Activated CD8-positive, alpha-beta T cell treated with anti-CD3 and anti-CD28 coated beads, Interleukin-2, amount 10 ng/mL, durations not matched to agents 7 days and 5 days (primary cell): ENCODE measurements at regions of chr14 and their contacts with region 1.

Region 1: DNA sequence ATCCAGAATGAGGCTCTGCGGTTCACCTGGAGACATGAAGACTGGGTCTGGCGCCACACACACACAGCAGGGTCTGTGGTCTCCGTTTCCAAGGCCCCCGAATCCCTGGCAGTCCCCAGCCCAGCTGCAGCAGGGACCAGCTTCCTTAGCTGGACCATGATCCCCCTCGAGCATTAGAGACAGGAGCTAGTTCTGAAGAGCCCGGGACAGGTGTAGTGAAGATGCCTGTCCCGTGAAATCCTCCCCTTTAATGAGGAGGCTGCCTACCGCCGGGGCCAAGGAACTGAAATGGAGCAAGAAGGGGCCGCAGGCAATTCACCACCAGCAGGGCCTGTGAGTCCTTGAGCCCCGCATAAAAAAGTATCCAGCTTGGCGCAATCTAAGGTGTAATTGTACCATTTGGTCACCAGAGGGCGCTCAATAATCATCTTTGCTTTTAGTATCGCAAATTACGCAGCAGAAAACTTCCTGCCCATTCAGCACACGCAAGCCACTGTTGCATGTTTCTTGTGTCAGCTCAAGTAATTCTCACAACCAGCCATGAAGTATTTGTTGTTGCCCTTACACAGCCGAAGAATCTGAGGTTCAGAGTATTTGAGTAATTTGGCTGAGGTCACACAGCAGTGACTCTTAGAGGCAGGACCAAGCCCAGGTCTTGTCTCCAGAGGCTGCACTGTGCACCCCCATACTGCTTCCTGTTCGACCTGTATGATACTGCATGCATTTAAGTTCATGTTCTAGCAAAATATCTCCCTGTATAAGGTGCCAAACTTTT is 54.3 kb upstream of the PPP2R5C start:
- DNase-seq: peak; percentile 81
- ATAC-seq: peak; percentile 66
- H3K4me3 Mint-ChIP-seq: peak overlapping the region; percentile 3
- H3K27ac Mint-ChIP-seq: peak overlapping the region; percentile 73
- H3K4me1 Mint-ChIP-seq: peaks cover 33% of the 10 kb centered on the region
- H3K27me3 Mint-ChIP-seq: peaks cover 19% of the 10 kb centered on the region

Region 2: DNA sequence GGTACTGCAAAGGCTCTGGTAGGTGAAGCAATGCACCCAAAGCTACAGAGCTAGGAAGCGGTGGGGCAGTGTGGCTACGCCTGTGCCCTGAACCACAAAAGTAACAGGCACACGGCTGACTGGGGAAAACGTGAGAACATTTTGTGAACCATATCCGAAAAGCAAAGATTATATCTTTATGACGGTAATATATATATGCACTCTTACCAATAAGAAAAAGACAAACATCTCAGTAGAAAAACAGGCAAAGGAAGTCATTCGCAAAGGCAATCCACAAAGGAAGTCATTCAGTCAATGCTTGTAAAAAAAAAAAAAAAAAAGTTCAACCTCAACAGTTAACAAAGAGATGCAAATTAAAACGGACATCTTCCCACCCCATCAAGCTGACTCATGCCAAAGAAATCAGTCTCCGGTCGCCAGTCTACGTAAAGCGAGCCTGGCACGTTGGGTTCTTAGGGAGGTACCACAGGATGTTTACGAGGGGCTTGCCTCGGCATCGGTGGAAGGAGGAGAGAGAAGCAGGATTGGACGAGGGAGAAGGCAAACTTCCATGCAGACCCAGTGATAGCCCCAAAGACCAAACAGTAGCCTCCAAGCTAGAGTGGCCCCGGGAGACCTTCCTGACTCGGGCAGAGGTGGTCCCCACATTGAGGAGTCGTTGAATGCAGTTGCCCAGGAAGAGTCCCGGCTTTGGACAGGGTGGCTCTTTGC is 14.9 kb after region 1 on chr14:
- CTCF ChIA-PET with region 1: interaction called, 19 read pairs
- POLR2A ChIA-PET with region 1: interaction called, 14 read pairs
- DNase-seq: peak; percentile 85
- ATAC-seq: peak; percentile 91
- H3K4me3 Mint-ChIP-seq: peak overlapping the region; percentile 76
- H3K27ac Mint-ChIP-seq: peak overlapping the region; percentile 100
- H3K4me1 Mint-ChIP-seq: peaks cover 30% of the 10 kb centered on the region
- H3K27me3 Mint-ChIP-seq: peaks cover 2% of the 10 kb centered on the region

Region 3: GRCh38 chr14:101761032-101761880 is 54.0 kb after region 1 on chr14 and contains the start of gene PPP2R5C:
- CTCF ChIA-PET with region 1: interaction called, 39 read pairs
- POLR2A ChIA-PET with region 1: interaction called, 5 read pairs
- DNase-seq: peak; percentile 91
- ATAC-seq: peak; percentile 84
- H3K4me3 Mint-ChIP-seq: peak within 1 kb of the TSS; percentile 82
- H3K27ac Mint-ChIP-seq: peak within 1 kb of the TSS; percentile 80
- H3K4me1 Mint-ChIP-seq: peaks cover 12% of the 10 kb centered on the region
- H3K27me3 Mint-ChIP-seq: peaks cover 11% of the 10 kb centered on the region
- total RNA-seq, gene PPP2R5C: 218 to 223 TPM

Region 4: DNA sequence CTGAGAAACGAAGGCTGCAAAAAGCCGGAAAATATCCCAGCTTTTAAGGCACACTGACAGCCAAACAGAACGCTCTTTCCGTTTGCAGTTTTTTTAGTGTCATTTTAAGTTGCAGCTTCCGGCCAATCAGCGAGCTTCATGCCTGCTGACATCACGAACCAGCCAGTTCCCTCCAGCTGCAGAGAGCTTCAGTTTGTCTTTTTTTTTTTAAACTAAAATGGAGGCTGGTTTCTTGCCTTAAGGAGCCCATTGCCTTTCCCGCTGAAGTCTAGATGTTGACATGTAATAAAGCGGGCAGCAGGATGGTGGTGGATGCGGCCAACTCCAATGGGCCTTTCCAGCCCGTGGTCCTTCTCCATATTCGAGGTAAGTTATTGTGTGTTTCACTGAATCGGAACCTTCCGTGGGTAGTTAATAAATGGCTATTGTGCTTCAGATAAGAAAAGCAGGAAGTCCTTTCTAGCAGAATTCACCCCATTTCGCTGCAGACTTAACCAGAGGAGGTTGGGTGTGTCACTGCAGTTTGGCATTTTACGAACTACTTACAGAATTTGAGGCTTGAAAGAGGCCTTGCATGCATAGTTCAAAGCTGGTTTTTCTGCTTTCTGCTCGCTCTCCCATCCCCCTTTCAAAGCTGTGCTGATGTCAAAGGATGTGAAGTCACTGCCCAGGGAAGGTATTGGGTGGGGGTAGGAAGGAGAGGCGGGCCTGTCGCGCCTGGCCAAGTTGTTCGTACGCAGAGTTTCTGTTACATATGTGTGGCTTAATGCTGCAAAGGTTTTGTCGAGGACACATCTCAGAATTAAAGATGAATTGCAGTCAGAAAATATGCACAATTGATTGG is 102.6 kb after region 1 on chr14:
- CTCF ChIA-PET with region 1: interaction called, 13 read pairs
- POLR2A ChIA-PET with region 1: interaction called, 12 read pairs
- DNase-seq: peak; percentile 93
- ATAC-seq: peak; percentile 87
- H3K4me3 Mint-ChIP-seq: peak overlapping the region; percentile 96
- H3K27ac Mint-ChIP-seq: peak overlapping the region; percentile 100
- H3K4me1 Mint-ChIP-seq: peaks cover 45% of the 10 kb centered on the region
- H3K27me3 Mint-ChIP-seq: no peaks in the 10 kb centered on the region

Region 5: DNA sequence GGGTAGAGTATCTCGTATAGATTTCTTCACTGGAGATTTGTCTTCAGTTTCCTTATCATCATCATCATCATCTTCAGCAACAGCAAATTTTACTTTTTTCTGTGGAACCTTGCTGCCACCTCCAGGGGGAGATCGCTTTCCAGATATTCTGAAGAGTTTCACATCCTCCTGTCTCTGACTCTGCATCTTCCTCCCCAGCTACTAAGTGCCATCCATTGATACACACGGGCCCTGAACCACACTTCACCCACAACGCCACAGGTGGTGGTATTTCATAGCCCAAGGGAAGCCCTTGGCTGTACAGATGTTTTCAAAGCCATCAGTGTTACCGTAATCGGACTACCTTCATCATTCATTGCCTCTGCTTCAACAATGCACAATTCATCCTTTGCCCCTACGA is 136.4 kb after region 1 on chr14:
- CTCF ChIA-PET with region 1: interaction called, 11 read pairs
- POLR2A ChIA-PET with region 1: no interaction called
- DNase-seq: peak; percentile 70
- ATAC-seq: peak; percentile 74
- H3K4me3 Mint-ChIP-seq: no peak overlapping the region
- H3K27ac Mint-ChIP-seq: peak overlapping the region; percentile 73
- H3K4me1 Mint-ChIP-seq: peaks cover 83% of the 10 kb centered on the region
- H3K27me3 Mint-ChIP-seq: no peaks in the 10 kb centered on the region

Region 6: GRCh38 chr14:101964297-101965144 is 257.3 kb after region 1 on chr14 and contains the start of gene DYNC1H1:
- CTCF ChIA-PET with region 1: interaction called, 16 read pairs
- POLR2A ChIA-PET with region 1: interaction called, 3 read pairs
- DNase-seq: peak; percentile 90
- ATAC-seq: peak; percentile 86
- H3K4me3 Mint-ChIP-seq: peak within 1 kb of the TSS; percentile 94
- H3K27ac Mint-ChIP-seq: peak within 1 kb of the TSS; percentile 94
- H3K4me1 Mint-ChIP-seq: peaks cover 44% of the 10 kb centered on the region
- H3K27me3 Mint-ChIP-seq: peaks cover 3% of the 10 kb centered on the region
- total RNA-seq, gene DYNC1H1: 271 to 274 TPM

Region 7: DNA sequence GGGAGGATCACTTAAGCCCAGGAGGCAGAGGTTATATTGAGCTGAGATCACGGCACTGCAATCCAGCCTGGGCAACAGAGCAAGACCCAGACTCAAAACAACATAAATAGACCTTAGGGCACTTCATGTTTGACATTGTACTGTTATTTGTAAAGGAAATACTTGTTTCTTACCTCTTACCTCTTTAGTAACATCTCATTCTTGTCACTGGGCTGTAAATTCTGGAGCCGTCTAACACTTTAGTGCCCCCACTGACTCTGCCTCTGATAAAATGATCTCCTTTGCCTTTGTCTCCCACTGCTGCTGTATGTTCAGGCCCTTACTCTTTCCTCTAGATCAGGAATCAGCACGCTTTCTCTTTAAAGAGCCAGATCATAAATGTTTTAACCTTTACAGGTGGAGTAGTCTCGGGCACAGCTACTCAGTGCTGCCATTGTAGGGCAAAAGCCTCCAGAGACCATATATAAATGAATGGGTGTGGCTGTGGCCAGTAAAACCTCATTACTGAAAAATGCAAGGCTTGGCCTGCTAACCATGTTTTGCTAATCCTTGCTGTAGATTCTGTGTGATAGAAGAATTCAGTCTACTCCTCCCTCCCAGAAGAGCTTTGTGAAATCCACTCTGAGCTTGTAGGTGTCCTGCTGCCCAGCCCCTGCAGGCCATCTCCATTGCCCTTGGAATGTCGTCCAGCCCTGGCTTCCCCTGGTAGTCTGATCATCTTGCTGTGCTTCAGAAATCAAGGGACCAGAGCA is 321.3 kb after region 1 on chr14:
- CTCF ChIA-PET with region 1: no interaction called
- POLR2A ChIA-PET with region 1: no interaction called
- DNase-seq: no peak
- ATAC-seq: no peak
- H3K4me3 Mint-ChIP-seq: no peak overlapping the region
- H3K27ac Mint-ChIP-seq: peak overlapping the region; percentile 1
- H3K4me1 Mint-ChIP-seq: no peaks in the 10 kb centered on the region
- H3K27me3 Mint-ChIP-seq: no peaks in the 10 kb centered on the region